Prostate gland (tissue), 2 donors: ENCODE measurements at regions of chr9 and their contacts with region 1.

Region 1: DNA sequence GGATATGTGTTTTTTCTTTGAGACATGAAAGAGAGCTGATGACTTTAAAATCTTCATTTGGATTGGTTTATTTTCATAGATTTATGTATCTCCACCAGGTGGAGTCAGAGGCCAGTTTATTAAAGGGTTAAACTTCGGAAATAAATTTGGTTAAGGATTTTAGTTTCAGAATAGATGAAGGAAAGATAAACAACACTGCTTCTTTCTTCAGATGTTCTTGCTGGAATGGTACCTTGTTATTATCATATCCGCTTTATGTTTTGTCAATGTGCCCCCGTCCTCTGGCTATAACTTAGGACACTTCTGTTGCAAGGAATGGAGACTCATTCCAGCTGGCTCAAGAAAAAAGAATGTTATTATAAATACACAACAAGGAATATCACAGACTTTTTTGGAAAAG is 81.2 kb downstream of the ALDH1A1 start:
- DNase-seq: no peak
- H3K4me3 ChIP-seq: no peak overlapping the region
- H3K27ac ChIP-seq: no peak overlapping the region
- H3K4me1 ChIP-seq: no peaks in the 10 kb centered on the region
- H3K27me3 ChIP-seq: no peaks in the 10 kb centered on the region
- CTCF ChIP-seq: peak in 3 of 4 experiments; percentile 48 to 68 (median 62)
- POLR2A ChIP-seq: no peak

Region 2: GRCh38 chr9:73023025-73023541 is 151.4 kb after region 1 on chr9:
- intact Hi-C with region 1: loop called (anchors 2 kb)
- DNase-seq: peak; percentile 19
- H3K4me3 ChIP-seq: no peak overlapping the region
- H3K27ac ChIP-seq: no peak overlapping the region
- H3K4me1 ChIP-seq: no peaks in the 10 kb centered on the region
- H3K27me3 ChIP-seq: no peaks in the 10 kb centered on the region
- CTCF ChIP-seq: peak; percentile 63 to 78 (median 76)
- POLR2A ChIP-seq: no peak

Region 3: DNA sequence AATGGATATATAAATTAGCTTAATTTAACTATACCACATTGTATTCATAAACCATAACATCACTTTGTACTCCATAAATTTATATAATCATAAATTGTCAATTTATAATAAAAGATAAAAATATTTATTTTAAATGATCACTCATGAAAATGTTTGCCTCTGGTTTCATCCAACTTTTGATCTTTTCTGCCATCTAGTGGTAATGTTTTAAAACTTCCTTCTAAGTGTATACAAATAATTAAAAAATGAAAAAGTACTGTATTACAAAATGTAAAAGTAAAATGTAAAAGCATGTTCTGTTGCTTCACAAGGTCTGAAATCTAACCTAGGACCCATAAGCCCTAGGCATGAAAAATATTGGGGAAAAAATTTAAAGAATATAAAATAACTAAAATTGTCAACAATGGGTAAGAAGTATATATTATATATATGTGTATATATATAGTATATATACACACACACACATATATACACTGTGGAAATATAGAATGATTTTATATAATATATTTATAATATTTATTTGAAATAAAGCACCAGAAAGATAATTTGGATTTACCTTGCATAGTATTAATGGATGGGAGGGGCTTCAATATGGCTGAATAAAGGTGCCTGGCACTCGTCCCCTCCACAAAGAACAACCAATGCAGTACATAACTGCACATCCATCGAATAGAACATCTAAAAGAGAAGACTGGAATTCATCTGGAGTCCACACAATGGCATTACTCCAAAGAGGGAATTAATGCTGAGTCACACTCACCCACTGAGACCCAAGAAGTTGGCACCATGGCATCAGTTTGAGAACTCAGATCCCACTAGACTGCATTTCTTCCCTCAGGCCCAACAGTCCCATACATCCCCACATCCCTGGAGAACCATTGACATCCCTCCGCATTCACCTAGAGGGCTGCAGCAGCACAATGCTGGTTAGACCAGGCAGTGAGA is 312.5 kb after region 1 on chr9:
- intact Hi-C with region 1: loop called (anchors 10 kb)
- DNase-seq: no peak
- H3K4me3 ChIP-seq: no peak overlapping the region
- H3K27ac ChIP-seq: no peak overlapping the region
- H3K4me1 ChIP-seq: peaks cover 2% of the 10 kb centered on the region
- H3K27me3 ChIP-seq: no peaks in the 10 kb centered on the region
- CTCF ChIP-seq: peak; percentile 12 to 77 (median 59)
- POLR2A ChIP-seq: no peak